Left ventricle myocardium superior (tissue), 1 donor: ENCODE measurements at regions of chr14 and their contacts with region 1.

Region 1: GRCh38 chr14:63543000-63543825 is at the start of gene PPP2R5E:
- DNase-seq: peak; percentile 97
- ATAC-seq: peak; percentile 99
- total RNA-seq, gene PPP2R5E: 36.9 TPM

Region 2: DNA sequence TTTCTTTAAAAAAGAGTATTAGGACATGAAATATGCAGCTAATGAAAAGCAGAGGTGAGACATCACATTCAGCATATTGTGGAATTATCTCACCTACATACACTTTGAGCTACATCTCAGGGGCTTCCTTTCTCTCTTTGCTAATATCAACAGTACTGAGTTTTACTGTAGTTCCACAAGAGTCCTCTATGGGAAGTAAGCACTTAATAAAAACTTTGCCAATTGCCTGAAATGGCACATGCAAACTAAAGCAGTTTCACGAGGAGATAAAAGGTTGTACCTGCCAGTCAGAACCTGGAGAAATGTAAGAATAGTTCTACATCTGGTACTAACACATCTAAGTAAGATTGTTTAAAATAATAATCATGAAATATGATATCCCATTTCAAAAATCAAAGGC is 151.0 kb before region 1 on chr14:
- intact Hi-C with region 1: loop called (anchors 5 kb)
- DNase-seq: no peak
- ATAC-seq: no peak

Region 3: GRCh38 chr14:63454863-63455622 is 88.2 kb before region 1 on chr14:
- intact Hi-C with region 1: no loop called
- DNase-seq: no peak
- ATAC-seq: peak; percentile 72